Astrocyte of the cerebellum (primary cell): ENCODE measurements at regions of chr21 and their contacts with region 1.

Region 1: DNA sequence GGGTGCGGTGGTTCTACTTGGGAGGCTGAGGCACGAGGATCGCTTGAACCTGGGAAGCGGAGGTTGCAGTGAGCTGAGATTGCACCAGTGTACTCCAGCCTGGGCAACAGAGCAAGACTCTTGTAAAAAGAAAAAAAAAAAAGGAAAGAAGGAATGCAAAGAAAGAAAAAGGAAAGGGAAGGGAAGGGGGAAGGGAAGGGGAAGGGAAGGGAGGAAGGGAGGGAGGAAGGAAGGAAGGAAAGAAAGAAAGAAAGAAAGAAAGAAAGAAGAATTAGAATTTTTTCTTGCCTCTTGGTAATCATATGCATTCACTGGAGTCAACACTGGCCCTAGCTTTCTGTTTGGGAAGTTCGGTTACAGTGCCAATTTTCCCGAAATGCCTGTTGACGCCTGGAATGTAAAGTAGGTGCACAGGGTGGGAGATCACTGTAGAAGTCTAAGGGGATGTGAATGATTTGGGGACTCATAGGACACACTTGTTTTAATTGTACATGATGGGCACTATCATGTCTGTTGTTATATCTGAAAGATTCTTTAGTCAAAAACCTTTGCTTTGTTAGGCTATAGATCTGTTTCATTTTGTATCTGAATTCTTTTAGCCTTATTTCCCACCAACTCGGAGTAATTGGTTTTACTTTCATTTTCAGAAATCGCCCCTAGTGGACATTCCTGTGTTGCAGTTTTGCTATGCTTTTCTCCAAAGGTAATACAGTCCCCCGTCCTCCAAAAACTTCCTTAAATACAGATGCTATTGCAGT is 59.8 kb upstream of the MORC3 start:
- DNase-seq: peak; percentile 72
- H3K4me3 ChIP-seq: peak overlapping the region; percentile 43
- CTCF ChIP-seq: peak; percentile 78

Region 2: DNA sequence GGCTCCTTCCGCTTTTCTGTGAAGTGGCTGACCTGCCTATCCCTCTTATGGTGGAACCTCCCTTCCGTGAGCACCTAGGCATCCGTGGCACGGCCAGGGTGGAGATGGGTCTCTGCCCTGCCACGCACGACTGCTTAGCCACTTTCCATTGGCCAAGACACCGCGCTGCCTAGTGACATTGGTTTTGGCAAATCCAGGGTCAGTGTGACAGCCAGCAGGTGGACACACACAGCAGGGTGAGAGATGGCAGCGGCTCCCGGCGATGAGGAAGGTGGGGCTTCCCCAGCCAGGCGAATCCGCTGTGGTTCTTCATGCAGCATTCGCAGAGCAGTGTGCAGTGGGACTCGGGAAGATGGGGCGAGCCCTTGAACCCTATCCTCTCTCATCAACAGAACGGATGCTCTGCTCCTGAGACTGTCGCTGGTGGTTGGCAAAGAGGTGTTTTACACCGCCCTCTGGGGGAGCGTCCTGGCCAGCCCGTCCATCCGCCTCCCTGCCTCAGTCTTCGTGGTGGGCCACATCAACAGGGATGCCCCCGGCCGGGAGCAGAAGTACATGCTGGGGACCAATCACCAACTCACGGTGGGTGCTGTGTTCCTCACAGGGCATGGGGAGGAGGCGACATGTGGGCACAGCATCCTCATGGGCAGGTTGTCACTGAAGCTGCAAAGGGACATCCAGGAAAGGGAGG is 51.7 kb before region 1 on chr21:
- in situ Hi-C with region 1: no loop called
- DNase-seq: no peak
- H3K4me3 ChIP-seq: no peak overlapping the region
- CTCF ChIP-seq: no peak

Region 3: GRCh38 chr21:36218691-36219090 is 41.5 kb before region 1 on chr21:
- in situ Hi-C with region 1: loop called (anchors 5 kb)
- DNase-seq: no peak
- H3K4me3 ChIP-seq: no peak overlapping the region
- CTCF ChIP-seq: no peak

Region 4: GRCh38 chr21:36369064-36369685 is 109.0 kb after region 1 on chr21:
- in situ Hi-C with region 1: loop called (anchors 10 kb)
- DNase-seq: no peak
- H3K4me3 ChIP-seq: no peak overlapping the region
- CTCF ChIP-seq: no peak

Region 5: GRCh38 chr21:36456729-36457414 is 196.7 kb after region 1 on chr21:
- in situ Hi-C with region 1: no loop called
- DNase-seq: no peak
- H3K4me3 ChIP-seq: no peak overlapping the region
- CTCF ChIP-seq: no peak